Dorsolateral prefrontal cortex (tissue), 120 donors: ENCODE measurements at regions of chr1 and their contacts with region 1.

Region 1: GRCh38 chr1:61299463-61299862 is 217.1 kb downstream of the NFIA start:
- DNase-seq: no peak
- H3K4me3 ChIP-seq: no peak overlapping the region
- H3K27ac ChIP-seq: peak overlapping the region in 37 of 59 donors; percentile 0 to 76 (median 32)
- H3K27me3 ChIP-seq: no peaks in the 10 kb centered on the region
- CTCF ChIP-seq: no peak

Region 2: GRCh38 chr1:61709908-61710289 is 410.4 kb after region 1 on chr1:
- intact Hi-C with region 1: loop called in 1 of 2 experiments (anchors 5 kb)
- DNase-seq: no peak
- H3K4me3 ChIP-seq: no peak overlapping the region
- H3K27ac ChIP-seq: no peak overlapping the region
- H3K27me3 ChIP-seq: no peaks in the 10 kb centered on the region
- CTCF ChIP-seq: no peak